Cardiac septum (tissue), 1 donor: ENCODE measurements at regions of chr4 and their contacts with region 1.

Region 1: DNA sequence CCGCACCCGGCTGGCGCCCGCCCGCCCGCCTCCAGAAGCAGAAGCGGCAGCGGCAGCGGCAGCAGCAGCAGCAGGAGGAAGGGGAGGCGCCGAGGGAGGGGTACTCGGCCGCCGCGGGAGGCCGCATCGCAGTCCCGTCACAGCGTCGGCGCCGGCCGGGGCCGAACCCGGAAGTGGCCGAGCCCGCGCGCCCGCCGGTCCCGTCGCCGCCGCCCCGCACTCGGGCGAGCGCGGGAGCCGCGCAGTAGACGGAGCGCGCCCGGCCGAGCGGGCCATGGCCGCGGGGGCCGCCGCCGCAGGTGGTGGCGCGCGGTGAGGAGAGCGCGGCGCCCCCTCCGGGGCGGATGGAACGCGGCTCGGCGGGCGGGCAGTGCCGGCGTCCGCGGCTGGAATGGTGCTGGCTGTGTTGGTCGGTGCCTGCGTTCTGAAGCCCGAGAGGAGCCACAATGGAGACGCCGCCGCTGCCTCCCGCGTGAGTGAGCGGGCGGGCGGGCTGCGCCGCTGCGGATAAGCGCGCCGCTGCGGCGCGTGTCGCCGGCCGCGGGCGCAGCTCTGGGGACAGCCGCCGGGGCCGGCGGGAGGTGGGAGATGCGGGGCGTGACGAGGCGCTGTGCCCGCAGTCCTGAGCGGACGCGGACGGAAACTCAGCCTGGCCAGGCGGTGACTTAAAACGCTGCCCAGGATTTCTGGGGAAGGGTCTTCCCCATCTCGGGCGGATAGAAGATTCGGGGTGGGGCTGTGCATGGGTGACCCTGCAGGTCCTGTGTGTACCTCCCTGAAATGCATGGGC is at the start of gene KLHL2:
- DNase-seq: peak; percentile 94
- total RNA-seq, gene KLHL2: 13.1 TPM

Region 2: GRCh38 chr4:165112368-165113139 is 95.1 kb before region 1 on chr4 and contains the start of gene TMEM192:
- intact Hi-C with region 1: loop called (anchors 5 kb)
- DNase-seq: peak; percentile 98
- total RNA-seq, gene TMEM192: 10.6 TPM

Region 3: GRCh38 chr4:165873298-165874071 is 665.9 kb after region 1 on chr4:
- intact Hi-C with region 1: no loop called
- DNase-seq: no peak